ENCODE measurements at regions of chr10 and their contacts with region 1.

Region 1: DNA sequence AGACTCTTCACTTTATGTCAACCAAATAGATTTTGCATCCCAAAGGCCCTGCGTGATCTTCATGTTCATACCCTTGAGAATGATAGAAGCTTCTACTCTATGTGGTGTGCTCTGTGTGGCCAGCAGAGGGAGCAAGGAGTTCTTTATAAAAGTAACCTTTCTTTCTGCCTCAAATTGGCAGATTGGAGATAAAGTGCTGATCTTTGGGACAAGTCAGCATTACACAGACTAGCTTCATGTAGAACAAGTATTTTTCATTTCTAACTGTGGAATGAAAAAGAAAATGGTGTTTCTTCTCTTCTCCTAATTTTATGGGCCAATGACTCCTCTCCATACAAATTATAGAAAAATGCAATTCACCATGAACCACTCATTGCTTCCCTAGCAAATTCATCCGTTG is 1214.1 kb downstream of the SORCS1 start:
- DNase-seq: peak; percentile 68
- H3K4me3 Mint-ChIP-seq: no peak overlapping the region
- H3K27ac Mint-ChIP-seq: no peak overlapping the region
- H3K4me1 Mint-ChIP-seq: no peaks in the 10 kb centered on the region
- H3K27me3 Mint-ChIP-seq: no peaks in the 10 kb centered on the region

Region 2: DNA sequence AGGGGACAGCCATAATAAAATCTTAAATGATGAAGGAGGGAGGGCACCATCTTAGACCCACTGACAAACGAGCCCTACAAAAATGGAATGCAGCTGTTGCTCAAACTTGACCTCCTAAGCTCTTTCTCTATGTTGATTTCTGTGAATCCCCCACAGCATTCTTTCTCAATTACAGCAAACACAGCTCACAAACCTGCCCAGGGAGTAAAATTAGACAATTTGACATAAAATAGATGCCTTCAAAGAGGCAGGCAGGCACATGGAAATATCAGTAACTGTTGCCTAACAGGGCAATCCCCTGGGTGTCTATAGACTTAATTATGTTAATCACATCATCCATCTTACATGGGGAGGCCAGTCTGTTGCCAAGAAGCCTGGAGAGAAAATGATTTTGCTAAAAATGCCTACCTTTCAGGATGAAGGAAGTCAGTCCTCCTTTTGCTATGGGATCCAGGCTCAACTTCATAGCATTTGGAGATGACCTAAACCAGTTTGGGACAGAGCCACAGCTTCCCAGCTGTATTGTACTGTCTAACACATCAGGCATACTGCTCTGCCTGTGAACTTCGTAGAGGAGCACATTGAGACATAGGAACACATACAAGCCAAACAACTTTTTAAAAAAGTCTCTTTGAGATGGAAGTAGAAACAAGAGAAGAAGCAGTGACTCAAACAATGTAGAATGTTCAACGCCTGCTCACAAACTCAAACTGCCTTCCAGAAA is 36.7 kb after region 1 on chr10:
- intact Hi-C with region 1: no loop called
- DNase-seq: no peak
- H3K4me3 Mint-ChIP-seq: no peak overlapping the region
- H3K27ac Mint-ChIP-seq: no peak overlapping the region
- H3K4me1 Mint-ChIP-seq: no peaks in the 10 kb centered on the region
- H3K27me3 Mint-ChIP-seq: no peaks in the 10 kb centered on the region

Region 3: GRCh38 chr10:106189292-106189691 is 238.9 kb after region 1 on chr10:
- intact Hi-C with region 1: loop called (anchors 5 kb)
- DNase-seq: peak; percentile 58
- H3K4me3 Mint-ChIP-seq: no peak overlapping the region
- H3K27ac Mint-ChIP-seq: no peak overlapping the region
- H3K4me1 Mint-ChIP-seq: no peaks in the 10 kb centered on the region
- H3K27me3 Mint-ChIP-seq: no peaks in the 10 kb centered on the region

Measured in activated CD4-positive, alpha-beta T cell treated with anti-CD3 and anti-CD28 coated beads, Interleukin-2, amount 10 ng/mL, durations not matched to agents 24 days and 14 days (primary cell).